WTC11 (cell line): ENCODE measurements at regions of chr5 and their contacts with region 1.

Region 1: GRCh38 chr5:72611118-72611730 is 104.0 kb upstream of the ZNF366 start:
- DNase-seq: peak; percentile 77
- ATAC-seq: peak; percentile 99
- H3K4me3 Mint-ChIP-seq: no peak overlapping the region
- H3K27ac Mint-ChIP-seq: no peak overlapping the region
- H3K4me1 Mint-ChIP-seq: peaks cover 17% of the 10 kb centered on the region
- H3K27me3 Mint-ChIP-seq: peaks cover 9% of the 10 kb centered on the region
- CTCF ChIP-seq: no peak; the same call in 1 of the 2 replicates

Region 2: GRCh38 chr5:72566746-72567145 is 44.5 kb before region 1 on chr5:
- CTCF ChIA-PET with region 1: no interaction called
- POLR2A ChIA-PET with region 1: no interaction called
- DNase-seq: no peak
- ATAC-seq: no peak
- H3K4me3 Mint-ChIP-seq: no peak overlapping the region
- H3K27ac Mint-ChIP-seq: no peak overlapping the region
- H3K4me1 Mint-ChIP-seq: peaks cover 4% of the 10 kb centered on the region
- H3K27me3 Mint-ChIP-seq: no peaks in the 10 kb centered on the region
- CTCF ChIP-seq: no peak

Region 3: DNA sequence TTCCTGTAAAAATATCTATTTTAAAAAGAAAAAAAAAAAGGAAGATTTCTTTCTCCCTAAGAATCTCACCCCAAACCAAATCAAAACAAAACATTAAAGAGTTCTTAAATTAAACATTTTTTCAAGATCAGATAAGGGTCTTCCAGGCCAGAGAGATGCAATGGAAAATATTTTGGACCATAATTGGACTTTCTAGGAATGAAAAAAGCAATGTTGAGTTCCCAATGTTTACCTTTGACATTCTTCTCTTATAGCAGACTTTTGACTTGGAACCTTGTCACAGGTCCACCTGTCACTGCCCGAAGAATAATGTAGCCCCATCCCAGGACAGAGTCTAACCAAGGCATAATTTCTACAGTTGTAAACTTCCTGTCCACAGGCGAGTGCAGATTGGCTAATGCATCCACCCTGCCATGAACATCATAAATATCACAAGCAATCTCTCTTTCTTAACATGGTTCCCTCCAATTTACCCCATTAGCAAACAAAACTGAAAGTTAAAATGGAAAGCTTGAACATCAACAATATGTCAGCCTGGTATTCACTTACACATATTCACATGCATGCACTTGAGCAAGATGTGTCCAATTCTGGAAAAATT is 17.6 kb after region 1 on chr5:
- CTCF ChIA-PET with region 1: interaction called, 13 read pairs
- POLR2A ChIA-PET with region 1: no interaction called
- DNase-seq: no peak
- ATAC-seq: no peak
- H3K4me3 Mint-ChIP-seq: no peak overlapping the region
- H3K27ac Mint-ChIP-seq: no peak overlapping the region
- H3K4me1 Mint-ChIP-seq: peaks cover 20% of the 10 kb centered on the region
- H3K27me3 Mint-ChIP-seq: no peaks in the 10 kb centered on the region
- CTCF ChIP-seq: no peak

Region 4: DNA sequence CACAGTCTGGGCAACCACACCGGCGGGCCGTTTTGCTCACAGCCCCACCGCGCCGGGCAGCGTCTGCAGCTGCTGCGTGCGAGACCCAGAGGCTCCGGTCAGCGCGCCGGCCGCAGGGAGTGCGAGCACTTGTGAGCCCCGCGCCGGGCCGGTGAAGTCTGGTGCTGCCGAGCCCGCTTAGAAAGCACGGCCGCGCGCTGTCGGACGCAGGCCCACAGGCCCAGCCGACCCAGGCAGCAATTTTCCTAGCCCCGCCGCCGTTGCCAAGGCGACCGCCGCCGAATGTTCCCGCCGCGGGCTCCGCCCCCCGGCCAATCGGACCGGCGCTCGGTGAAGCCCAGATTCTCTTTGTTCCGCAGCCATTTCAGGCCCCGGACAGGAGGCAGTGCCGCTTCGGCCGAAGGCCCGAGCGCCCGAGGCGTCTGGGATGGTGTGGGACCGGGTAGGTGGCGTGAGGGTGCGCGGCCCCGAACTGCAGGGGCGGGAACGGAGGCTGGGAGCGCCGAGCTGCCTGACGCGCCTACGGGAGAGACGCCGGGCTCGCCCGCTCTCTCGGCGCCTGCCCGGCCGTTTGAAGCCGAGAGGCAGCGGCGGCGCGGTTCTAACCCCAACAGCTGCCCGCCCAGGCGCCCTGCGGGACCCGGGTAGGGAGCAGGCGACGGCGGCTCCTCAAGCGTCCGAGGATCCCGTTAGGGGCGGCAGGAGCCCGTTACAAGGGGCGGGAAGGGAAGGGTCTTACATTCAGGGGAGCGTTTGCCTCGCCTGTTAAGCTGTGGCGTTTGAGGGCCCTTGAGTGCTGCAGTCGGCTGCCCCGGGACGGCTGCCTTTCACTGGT is 205.3 kb after region 1 on chr5 and contains the start of gene TNPO1:
- CTCF ChIA-PET with region 1: interaction called, 38 read pairs
- POLR2A ChIA-PET with region 1: no interaction called
- DNase-seq: peak; percentile 91
- ATAC-seq: peak; percentile 88
- H3K4me3 Mint-ChIP-seq: peak within 1 kb of the TSS; percentile 99
- H3K27ac Mint-ChIP-seq: peak within 1 kb of the TSS; percentile 89
- H3K4me1 Mint-ChIP-seq: peaks cover 25% of the 10 kb centered on the region
- H3K27me3 Mint-ChIP-seq: no peaks in the 10 kb centered on the region
- CTCF ChIP-seq: no peak
- total RNA-seq, gene TNPO1: 132 to 150 TPM (median 134 TPM) in 3 replicates